GM12878 (cell line): ENCODE measurements at regions of chr11 and their contacts with region 1.

Region 1: DNA sequence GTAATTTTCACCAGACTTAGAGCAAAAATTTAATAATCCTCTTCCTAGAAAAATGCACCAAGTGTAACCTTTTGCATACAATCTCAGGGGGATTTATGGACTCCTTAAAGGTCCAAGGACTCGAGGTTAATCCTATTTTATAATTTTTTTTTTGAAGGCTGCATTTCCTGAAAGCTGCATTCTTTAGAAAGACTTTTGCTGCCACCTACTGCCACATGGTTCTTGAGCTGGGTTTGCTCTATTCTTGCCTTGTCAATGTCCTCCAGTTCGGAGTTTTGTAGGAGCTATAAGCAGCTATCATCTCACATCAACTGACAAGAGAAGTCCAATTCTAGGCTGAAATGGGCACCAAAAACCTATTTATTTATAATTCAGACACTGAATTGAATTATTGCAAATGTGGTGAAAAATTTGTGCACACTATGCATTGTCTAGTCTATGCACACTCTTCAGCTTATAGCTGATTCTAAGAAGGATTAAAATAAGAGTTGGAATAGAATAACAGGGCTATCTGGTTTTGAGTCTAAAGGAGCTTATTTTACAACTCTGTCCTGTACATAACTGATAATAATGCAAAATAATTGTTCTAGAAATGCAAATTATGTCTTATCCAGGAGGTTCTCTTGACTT is 31.3 kb downstream of the TRAF6 start:
- DNase-seq: no peak
- ATAC-seq: peak; percentile 79
- H3K4me3 ChIP-seq: no peak overlapping the region
- H3K27ac ChIP-seq: no peak overlapping the region
- H3K4me1 ChIP-seq: no peaks in the 10 kb centered on the region
- H3K27me3 ChIP-seq: no peaks in the 10 kb centered on the region
- CTCF ChIP-seq: peak; percentile 34 to 75 (median 52); a peak in 5 of 6 replicates
- EP300 ChIP-seq: no peak
- POLR2A ChIP-seq: no peak
- RAD21 ChIP-seq: peak; percentile 89

Region 2: DNA sequence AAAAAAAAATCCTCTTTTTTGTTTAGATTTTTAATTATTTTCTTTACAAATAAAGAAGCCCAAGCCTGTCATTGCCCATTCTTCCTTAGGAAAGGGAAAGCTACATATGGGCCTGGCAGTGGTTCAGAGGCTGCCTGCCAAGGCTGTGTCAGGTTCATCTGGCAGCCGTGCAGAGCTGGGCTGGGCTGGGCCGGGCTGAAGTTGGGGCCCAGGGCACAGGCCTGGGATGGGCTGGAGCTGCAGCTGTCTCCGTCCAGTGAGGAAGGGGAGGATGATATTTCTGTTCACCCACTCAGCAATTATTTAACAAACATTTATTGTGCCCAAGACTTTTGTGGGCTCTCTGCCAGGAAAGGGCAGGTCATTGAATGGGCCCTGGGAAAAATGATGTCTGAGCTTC is 178.2 kb before region 1 on chr11:
- CTCF ChIA-PET with region 1: interaction called, 286 read pairs
- POLR2A ChIA-PET with region 1: no interaction called
- RAD21 ChIA-PET with region 1: interaction called, 19 read pairs
- SMC1A ChIA-PET with region 1: interaction called, 181 read pairs
- in situ Hi-C with region 1: loop called (anchors 10 kb)
- intact Hi-C with region 1: no loop called
- DNase-seq: no peak
- ATAC-seq: no peak
- H3K4me3 ChIP-seq: no peak overlapping the region
- H3K27ac ChIP-seq: no peak overlapping the region
- H3K4me1 ChIP-seq: no peaks in the 10 kb centered on the region
- H3K27me3 ChIP-seq: peaks cover 1 to 6% of the 10 kb centered on the region in 2 experiments; a peak in 2 of 4 replicates
- CTCF ChIP-seq: no peak
- EP300 ChIP-seq: no peak
- POLR2A ChIP-seq: no peak
- RAD21 ChIP-seq: no peak

Region 3: DNA sequence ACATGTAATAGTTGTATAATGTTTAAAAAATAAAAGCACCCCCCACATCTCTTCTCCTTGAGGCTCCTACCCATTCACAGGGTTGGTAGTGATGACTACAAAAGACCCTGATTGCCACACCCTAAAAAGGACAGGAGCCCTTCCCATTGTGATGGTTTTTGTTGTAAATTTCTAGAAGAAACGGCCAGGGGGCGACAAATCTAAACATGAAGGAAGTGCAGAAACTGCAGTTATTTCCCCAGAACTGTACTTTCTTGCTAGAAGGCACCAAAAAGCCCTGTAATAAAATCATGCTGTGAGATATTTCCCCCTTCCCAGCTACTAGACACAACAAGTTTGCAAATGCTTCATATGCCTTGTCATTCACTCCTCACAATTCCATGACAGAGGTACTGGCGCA is 171.9 kb before region 1 on chr11:
- CTCF ChIA-PET with region 1: interaction called, 286 read pairs
- POLR2A ChIA-PET with region 1: interaction called, 4 read pairs
- RAD21 ChIA-PET with region 1: interaction called, 29 read pairs
- SMC1A ChIA-PET with region 1: interaction called, 44 read pairs
- in situ Hi-C with region 1: loop called (anchors 10 kb)
- intact Hi-C with region 1: loop called (anchors 1 kb)
- DNase-seq: no peak
- ATAC-seq: peak; percentile 79
- H3K4me3 ChIP-seq: no peak overlapping the region
- H3K27ac ChIP-seq: no peak overlapping the region
- H3K4me1 ChIP-seq: no peaks in the 10 kb centered on the region
- H3K27me3 ChIP-seq: no peaks in the 10 kb centered on the region; a peak in 1 of 4 replicates
- CTCF ChIP-seq: peak; percentile 46 to 62 (median 50); a peak in 5 of 6 replicates
- EP300 ChIP-seq: no peak
- POLR2A ChIP-seq: no peak
- RAD21 ChIP-seq: peak; percentile 83

Region 4: DNA sequence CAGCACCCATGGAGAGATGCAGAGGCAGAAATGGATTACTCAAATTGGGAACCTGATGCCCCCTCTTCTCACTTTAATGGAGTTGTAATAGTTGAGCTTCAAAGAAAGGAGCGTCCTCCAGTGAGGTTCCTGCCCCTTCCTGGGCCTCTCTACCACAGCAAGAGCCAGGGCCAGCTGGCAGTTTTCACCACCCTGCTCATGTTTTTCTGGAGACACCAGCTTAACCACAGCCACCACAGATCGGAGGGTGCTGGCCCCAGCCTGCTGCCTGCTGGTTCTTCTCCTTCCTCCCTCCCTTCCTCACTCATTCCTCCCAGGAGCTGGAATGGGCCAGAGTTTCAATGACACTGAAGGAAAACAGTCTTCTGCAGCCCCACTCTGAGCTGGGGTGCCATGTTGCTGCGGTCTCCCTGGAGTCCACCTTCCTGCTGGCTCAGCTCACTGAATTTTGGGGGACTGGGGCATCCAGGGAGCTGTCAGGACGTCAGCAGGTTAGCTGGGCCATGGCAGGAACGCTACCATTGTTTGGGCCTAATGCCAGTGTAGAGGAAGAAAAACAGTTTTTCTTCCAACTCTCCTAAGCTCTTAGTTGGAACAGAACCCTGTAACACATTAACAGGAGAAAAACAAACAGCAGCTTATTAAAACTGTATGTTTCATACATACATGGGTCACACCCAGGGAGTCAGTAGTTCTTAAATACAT is 26.4 kb before region 1 on chr11:
- CTCF ChIA-PET with region 1: interaction called, 10 read pairs
- POLR2A ChIA-PET with region 1: no interaction called
- RAD21 ChIA-PET with region 1: interaction called, 3 read pairs
- SMC1A ChIA-PET with region 1: interaction called, 4 read pairs
- in situ Hi-C with region 1: no loop called
- intact Hi-C with region 1: no loop called
- DNase-seq: no peak
- ATAC-seq: no peak
- H3K4me3 ChIP-seq: no peak overlapping the region
- H3K27ac ChIP-seq: no peak overlapping the region
- H3K4me1 ChIP-seq: peaks cover 12% of the 10 kb centered on the region
- H3K27me3 ChIP-seq: no peaks in the 10 kb centered on the region
- CTCF ChIP-seq: no peak
- EP300 ChIP-seq: no peak
- POLR2A ChIP-seq: no peak
- RAD21 ChIP-seq: no peak

Region 5: GRCh38 chr11:36532941-36533601 is 54.3 kb after region 1 on chr11:
- CTCF ChIA-PET with region 1: no interaction called
- POLR2A ChIA-PET with region 1: no interaction called
- RAD21 ChIA-PET with region 1: no interaction called
- SMC1A ChIA-PET with region 1: no interaction called
- in situ Hi-C with region 1: no loop called
- intact Hi-C with region 1: loop called (anchors 10 kb)
- DNase-seq: no peak
- ATAC-seq: no peak
- H3K4me3 ChIP-seq: no peak overlapping the region
- H3K27ac ChIP-seq: no peak overlapping the region
- H3K4me1 ChIP-seq: no peaks in the 10 kb centered on the region
- H3K27me3 ChIP-seq: no peaks in the 10 kb centered on the region
- CTCF ChIP-seq: no peak
- EP300 ChIP-seq: no peak
- POLR2A ChIP-seq: no peak
- RAD21 ChIP-seq: no peak